ENCODE measurements at regions of chr9 and their contacts with region 1.

Region 1: GRCh38 chr9:89549031-89549644 is 51.2 kb upstream of the SEMA4D start:
- DNase-seq: peak; percentile 89
- ATAC-seq: peak; percentile 100
- H3K4me3 ChIP-seq: no peak overlapping the region
- H3K4me3 Mint-ChIP-seq: no peak overlapping the region
- H3K27ac ChIP-seq: no peak overlapping the region
- H3K27ac Mint-ChIP-seq: peak overlapping the region; percentile 37
- H3K4me1 ChIP-seq: peaks cover 0 to 4% of the 10 kb centered on the region in 2 donors
- H3K4me1 Mint-ChIP-seq: peaks cover 6% of the 10 kb centered on the region
- H3K27me3 ChIP-seq: no peaks in the 10 kb centered on the region
- H3K27me3 Mint-ChIP-seq: no peaks in the 10 kb centered on the region
- CTCF ChIP-seq: peak; percentile 98

Region 2: GRCh38 chr9:89318123-89319014 is 230.8 kb before region 1 on chr9 and contains the start of gene SECISBP2:
- CTCF ChIA-PET with region 1: interaction called, 3 read pairs
- POLR2A ChIA-PET with region 1: no interaction called
- intact Hi-C with region 1: loop called (anchors 1 kb)
- DNase-seq: peak; percentile 97
- ATAC-seq: peak; percentile 91
- H3K4me3 ChIP-seq: peak within 1 kb of the TSS; percentile 56 to 93 (median 81)
- H3K4me3 Mint-ChIP-seq: peak within 1 kb of the TSS; percentile 89
- H3K27ac ChIP-seq: peak within 1 kb of the TSS; percentile 96 to 99
- H3K27ac Mint-ChIP-seq: peak within 1 kb of the TSS; percentile 93
- H3K4me1 ChIP-seq: peaks cover 20 to 21% of the 10 kb centered on the region in 2 donors
- H3K4me1 Mint-ChIP-seq: peaks cover 65% of the 10 kb centered on the region
- H3K27me3 ChIP-seq: no peaks in the 10 kb centered on the region
- H3K27me3 Mint-ChIP-seq: no peaks in the 10 kb centered on the region
- CTCF ChIP-seq: peak; percentile 82
- total RNA-seq, gene SECISBP2: 124 and 130 TPM in 2 replicates

Region 3: GRCh38 chr9:89382026-89382986 is 166.8 kb before region 1 on chr9:
- CTCF ChIA-PET with region 1: interaction called, 83 read pairs
- POLR2A ChIA-PET with region 1: interaction called, 5 read pairs
- intact Hi-C with region 1: no loop called
- DNase-seq: no peak
- ATAC-seq: peak; percentile 49
- H3K4me3 ChIP-seq: no peak overlapping the region
- H3K4me3 Mint-ChIP-seq: peak overlapping the region; percentile 13
- H3K27ac ChIP-seq: no peak overlapping the region
- H3K27ac Mint-ChIP-seq: peak overlapping the region; percentile 46
- H3K4me1 ChIP-seq: peaks cover 0 to 21% of the 10 kb centered on the region in 2 donors
- H3K4me1 Mint-ChIP-seq: peaks cover 22% of the 10 kb centered on the region
- H3K27me3 ChIP-seq: no peaks in the 10 kb centered on the region
- H3K27me3 Mint-ChIP-seq: no peaks in the 10 kb centered on the region
- CTCF ChIP-seq: no peak

Region 4: GRCh38 chr9:89418882-89419640 is 130.1 kb before region 1 on chr9:
- CTCF ChIA-PET with region 1: interaction called, 39 read pairs
- POLR2A ChIA-PET with region 1: no interaction called
- intact Hi-C with region 1: no loop called
- DNase-seq: peak; percentile 70
- ATAC-seq: peak; percentile 86
- H3K4me3 ChIP-seq: peak overlapping the region in 4 of 5 experiments; percentile 1 to 42 (median 8)
- H3K4me3 Mint-ChIP-seq: peak overlapping the region; percentile 85
- H3K27ac ChIP-seq: peak overlapping the region; percentile 64 to 65
- H3K27ac Mint-ChIP-seq: peak overlapping the region; percentile 92
- H3K4me1 ChIP-seq: peaks cover 44 to 56% of the 10 kb centered on the region in 2 donors
- H3K4me1 Mint-ChIP-seq: peaks cover 68% of the 10 kb centered on the region
- H3K27me3 ChIP-seq: no peaks in the 10 kb centered on the region
- H3K27me3 Mint-ChIP-seq: no peaks in the 10 kb centered on the region
- CTCF ChIP-seq: no peak

Region 5: DNA sequence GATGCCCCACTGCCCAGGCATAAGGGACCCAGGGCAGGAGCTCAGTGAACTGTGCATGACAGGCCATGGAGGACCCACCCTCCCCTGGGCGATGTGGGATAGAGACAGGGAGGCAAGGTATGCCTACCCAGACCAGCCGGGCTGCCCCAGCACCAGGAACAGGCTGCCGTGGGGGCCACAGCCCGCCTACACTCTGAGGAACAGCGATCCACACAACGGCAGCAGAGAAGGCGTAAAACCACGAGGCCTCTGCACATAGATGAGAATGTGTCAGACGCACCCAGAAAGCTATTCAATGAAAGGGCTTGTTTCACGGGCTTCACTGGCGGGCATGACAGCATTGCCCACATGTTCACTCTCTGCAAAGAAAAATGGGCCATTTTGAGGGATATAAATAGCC is 100.8 kb before region 1 on chr9:
- CTCF ChIA-PET with region 1: interaction called, 20 read pairs
- POLR2A ChIA-PET with region 1: no interaction called
- intact Hi-C with region 1: no loop called
- DNase-seq: no peak
- ATAC-seq: peak; percentile 17
- H3K4me3 ChIP-seq: no peak overlapping the region
- H3K4me3 Mint-ChIP-seq: peak overlapping the region; percentile 32
- H3K27ac ChIP-seq: no peak overlapping the region
- H3K27ac Mint-ChIP-seq: peak overlapping the region; percentile 61
- H3K4me1 ChIP-seq: peaks cover 20 to 38% of the 10 kb centered on the region in 2 donors
- H3K4me1 Mint-ChIP-seq: peaks cover 63% of the 10 kb centered on the region
- H3K27me3 ChIP-seq: no peaks in the 10 kb centered on the region
- H3K27me3 Mint-ChIP-seq: no peaks in the 10 kb centered on the region
- CTCF ChIP-seq: no peak

Region 6: DNA sequence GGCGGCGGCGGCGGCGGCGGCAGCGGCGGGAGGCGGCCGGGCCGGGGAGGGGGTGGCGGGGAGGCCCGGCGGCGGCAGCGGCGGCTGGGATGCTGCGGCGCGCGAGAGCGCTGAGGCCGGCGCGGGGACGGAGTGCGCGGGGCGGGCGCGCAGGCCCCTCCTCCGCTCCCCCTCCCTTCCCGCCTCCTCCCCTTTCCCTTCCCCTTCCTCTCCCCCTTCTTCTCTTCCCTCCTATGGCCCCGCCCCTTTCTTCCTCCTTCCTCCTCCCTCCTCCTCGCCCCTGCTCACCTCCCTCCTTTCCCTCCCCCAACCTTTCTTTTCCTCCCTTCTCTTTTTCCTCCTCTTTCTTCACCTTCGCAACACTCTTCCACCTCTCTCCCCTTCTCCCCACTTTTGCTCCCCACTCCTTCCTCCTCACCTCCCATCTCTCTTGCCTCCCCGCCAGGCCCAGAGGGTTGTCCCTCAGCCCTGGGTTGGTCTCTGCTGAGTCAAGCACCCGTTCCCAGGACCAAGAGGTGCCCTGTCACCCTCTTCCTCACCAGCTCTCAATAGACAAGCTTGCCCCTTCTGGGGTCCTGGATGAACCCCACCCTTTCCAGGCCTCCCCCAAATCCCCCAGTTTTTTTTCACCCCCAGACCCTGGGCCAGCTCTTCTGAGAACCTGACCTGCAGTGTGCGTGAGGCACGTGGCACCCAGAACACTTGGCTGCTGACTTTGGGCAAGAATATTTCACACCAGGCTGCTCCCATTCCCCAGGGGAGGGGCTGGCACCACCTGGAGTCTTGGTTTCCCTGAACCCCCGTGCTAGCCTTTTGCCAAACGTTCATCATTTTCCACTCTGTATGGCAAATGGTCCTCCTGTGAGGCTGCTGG is 50.9 kb before region 1 on chr9 and contains the start of gene SEMA4D:
- CTCF ChIA-PET with region 1: interaction called, 25 read pairs
- POLR2A ChIA-PET with region 1: interaction called, 3 read pairs
- intact Hi-C with region 1: loop called (anchors 2 kb)
- DNase-seq: peak; percentile 67
- ATAC-seq: peak; percentile 64
- H3K4me3 ChIP-seq: peak within 1 kb of the TSS; percentile 67 to 93 (median 81)
- H3K4me3 Mint-ChIP-seq: peak within 1 kb of the TSS; percentile 89
- H3K27ac ChIP-seq: peak within 1 kb of the TSS; percentile 55 to 83
- H3K27ac Mint-ChIP-seq: peak within 1 kb of the TSS; percentile 96
- H3K4me1 ChIP-seq: peaks cover 61 to 67% of the 10 kb centered on the region in 2 donors
- H3K4me1 Mint-ChIP-seq: peaks cover 84% of the 10 kb centered on the region
- H3K27me3 ChIP-seq: no peaks in the 10 kb centered on the region
- H3K27me3 Mint-ChIP-seq: no peaks in the 10 kb centered on the region
- CTCF ChIP-seq: no peak
- total RNA-seq, gene SEMA4D: 215 and 231 TPM in 2 replicates

Region 7: GRCh38 chr9:89623925-89624420 is 74.8 kb after region 1 on chr9:
- CTCF ChIA-PET with region 1: no interaction called
- POLR2A ChIA-PET with region 1: no interaction called
- intact Hi-C with region 1: no loop called
- DNase-seq: no peak
- ATAC-seq: no peak
- H3K4me3 ChIP-seq: no peak overlapping the region
- H3K4me3 Mint-ChIP-seq: no peak overlapping the region
- H3K27ac ChIP-seq: no peak overlapping the region
- H3K27ac Mint-ChIP-seq: no peak overlapping the region
- H3K4me1 ChIP-seq: no peaks in the 10 kb centered on the region
- H3K4me1 Mint-ChIP-seq: no peaks in the 10 kb centered on the region
- H3K27me3 ChIP-seq: peaks cover 0 to 8% (median 3%) of the 10 kb centered on the region in 4 experiments
- H3K27me3 Mint-ChIP-seq: peaks cover 7% of the 10 kb centered on the region
- CTCF ChIP-seq: no peak

Region 8: GRCh38 chr9:90053027-90053426 is 503.9 kb after region 1 on chr9:
- CTCF ChIA-PET with region 1: no interaction called
- POLR2A ChIA-PET with region 1: no interaction called
- intact Hi-C with region 1: no loop called
- DNase-seq: no peak
- ATAC-seq: no peak
- H3K4me3 ChIP-seq: no peak overlapping the region
- H3K4me3 Mint-ChIP-seq: no peak overlapping the region
- H3K27ac ChIP-seq: no peak overlapping the region
- H3K27ac Mint-ChIP-seq: no peak overlapping the region
- H3K4me1 ChIP-seq: no peaks in the 10 kb centered on the region
- H3K4me1 Mint-ChIP-seq: no peaks in the 10 kb centered on the region
- H3K27me3 ChIP-seq: peaks cover 0 to 2% (median 0%) of the 10 kb centered on the region in 4 experiments
- H3K27me3 Mint-ChIP-seq: peaks cover 27% of the 10 kb centered on the region
- CTCF ChIP-seq: peak; percentile 15

Measured in B cell (primary cell).